BJ (cell line): ENCODE measurements at regions of chr17 and their contacts with region 1.

Region 1: DNA sequence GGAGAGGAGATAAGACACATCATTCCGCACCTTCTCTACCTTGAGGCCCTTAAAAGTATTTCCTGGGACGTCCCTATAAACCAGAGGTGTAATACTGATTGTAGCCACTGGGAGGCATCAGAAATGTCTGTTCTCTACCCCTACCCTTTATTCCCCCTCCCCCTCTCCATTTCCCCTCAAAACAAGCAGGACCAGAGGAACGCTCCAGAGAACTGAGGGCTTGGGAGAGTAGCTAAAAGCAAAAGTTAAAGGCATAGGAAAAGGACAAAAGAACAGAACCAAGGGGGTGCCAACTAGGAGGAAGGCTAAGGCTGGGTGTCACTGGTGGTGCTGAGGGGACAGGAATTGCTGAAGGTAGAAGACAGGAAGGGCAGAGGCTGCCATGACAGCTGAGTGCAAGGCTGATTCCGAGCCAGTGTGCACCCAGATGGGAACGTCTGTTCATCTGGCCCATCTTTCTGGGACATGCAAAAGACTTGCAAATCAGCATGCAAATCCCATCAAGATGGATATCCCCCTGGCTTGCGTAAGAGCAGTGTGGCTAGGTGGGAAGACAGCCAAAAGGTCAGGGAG is 6.7 kb downstream of the CAMTA2 start:
- DNase-seq: no peak
- H3K4me3 ChIP-seq: no peak overlapping the region
- H3K27me3 ChIP-seq: no peaks in the 10 kb centered on the region
- CTCF ChIP-seq: peak; percentile 66

Region 2: DNA sequence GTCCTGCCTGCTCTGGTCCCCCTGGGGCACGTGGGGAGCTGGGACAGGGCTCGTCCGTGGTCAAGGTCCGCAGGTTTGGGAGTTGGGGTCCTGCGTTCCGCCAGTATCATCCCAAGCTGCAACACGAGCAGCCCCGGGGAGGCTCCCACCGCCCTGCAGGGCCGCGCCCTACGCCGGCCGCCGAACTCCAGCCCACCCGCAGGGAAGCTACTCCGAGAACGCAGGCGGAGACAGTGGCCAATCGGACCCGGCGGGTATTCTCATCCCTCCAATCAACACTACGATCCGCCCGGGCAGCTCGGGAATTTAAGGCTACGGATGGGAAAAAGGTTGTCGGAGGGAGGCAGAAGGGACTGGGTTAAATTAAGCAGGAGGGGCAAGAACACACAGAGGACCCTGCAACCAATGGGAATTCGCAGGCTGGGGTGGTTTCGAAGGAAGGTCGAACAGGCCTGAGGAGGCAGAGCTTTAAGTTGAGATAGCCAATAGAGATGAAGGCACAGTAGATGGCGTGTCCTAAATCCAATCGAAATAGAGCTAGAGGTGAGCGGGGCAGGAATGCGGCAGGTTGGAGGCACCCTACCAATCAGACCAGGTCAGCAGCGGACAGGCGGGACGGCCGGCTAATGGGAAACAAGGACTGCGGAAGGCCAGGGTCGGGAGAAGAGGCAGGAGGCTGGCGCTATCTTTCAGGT is 13.7 kb before region 1 on chr17:
- CTCF ChIA-PET with region 1: interaction called, 40 read pairs
- POLR2A ChIA-PET with region 1: no interaction called
- DNase-seq: peak; percentile 99
- H3K4me3 ChIP-seq: peak overlapping the region; percentile 56
- H3K27me3 ChIP-seq: no peaks in the 10 kb centered on the region
- CTCF ChIP-seq: no peak

Region 3: GRCh38 chr17:5055543-5055942 is 74.8 kb after region 1 on chr17:
- CTCF ChIA-PET with region 1: interaction called, 22 read pairs
- POLR2A ChIA-PET with region 1: no interaction called
- DNase-seq: no peak
- H3K4me3 ChIP-seq: no peak overlapping the region
- H3K27me3 ChIP-seq: peaks cover 1% of the 10 kb centered on the region; the same call in 1 of the 2 replicates
- CTCF ChIP-seq: no peak

Region 4: DNA sequence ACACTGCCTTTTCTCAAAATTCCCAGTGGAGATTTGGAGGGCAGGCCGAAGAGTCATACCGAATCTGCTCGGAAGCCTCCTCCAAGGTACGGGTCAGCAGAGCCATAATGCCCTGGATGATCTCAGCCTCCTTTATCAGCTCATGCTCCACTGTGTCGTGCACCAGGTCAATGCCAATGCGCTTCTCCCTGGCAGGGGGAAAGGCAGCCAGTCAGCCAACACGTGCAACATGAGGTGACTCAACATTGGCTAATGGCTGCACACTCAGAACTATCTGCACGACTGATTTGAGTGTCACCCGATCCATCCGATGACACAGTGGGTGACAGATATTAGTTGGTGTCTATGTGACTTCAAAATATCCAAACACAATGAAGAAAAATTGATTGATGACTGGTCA is 1835.0 kb after region 1 on chr17:
- CTCF ChIA-PET with region 1: no interaction called
- POLR2A ChIA-PET with region 1: no interaction called
- DNase-seq: no peak
- H3K4me3 ChIP-seq: no peak overlapping the region
- H3K27me3 ChIP-seq: no peaks in the 10 kb centered on the region
- CTCF ChIP-seq: no peak